ENCODE measurements at regions of chr1 and their contacts with region 1.

Region 1: DNA sequence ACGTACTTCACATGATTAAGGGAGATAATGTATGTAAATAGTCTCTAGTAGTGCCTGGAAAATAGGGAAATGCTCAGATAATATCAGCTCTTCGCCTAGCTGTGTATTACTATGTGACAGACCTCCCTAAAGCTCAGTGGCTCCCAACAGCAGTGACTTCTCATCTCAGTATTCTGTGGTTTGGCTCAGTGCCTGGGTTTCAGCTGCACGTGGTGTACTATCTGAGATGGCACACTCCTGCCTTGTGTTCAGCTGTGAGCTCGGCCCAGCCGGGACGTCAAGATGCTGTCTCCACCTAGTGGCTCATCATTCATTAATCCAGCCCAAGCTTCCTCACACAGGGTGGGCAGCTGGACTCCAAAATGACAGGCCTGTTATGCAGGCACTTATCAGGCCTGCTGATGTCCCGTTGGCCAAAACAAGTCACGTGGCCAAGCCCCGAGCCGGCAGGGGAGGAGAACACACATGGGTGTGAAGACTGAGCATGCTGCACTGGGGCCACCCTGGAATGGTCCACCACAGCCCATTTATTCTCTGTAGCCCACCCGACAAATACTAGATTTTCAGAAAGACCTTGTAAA is 17.8 kb downstream of the SLFNL1 start:
- DNase-seq: peak; percentile 94
- ATAC-seq: peak; percentile 99
- H3K4me3 Mint-ChIP-seq: no peak overlapping the region
- H3K27ac Mint-ChIP-seq: peak overlapping the region; percentile 59
- H3K4me1 Mint-ChIP-seq: peaks cover 25% of the 10 kb centered on the region
- H3K27me3 Mint-ChIP-seq: no peaks in the 10 kb centered on the region

Region 2: DNA sequence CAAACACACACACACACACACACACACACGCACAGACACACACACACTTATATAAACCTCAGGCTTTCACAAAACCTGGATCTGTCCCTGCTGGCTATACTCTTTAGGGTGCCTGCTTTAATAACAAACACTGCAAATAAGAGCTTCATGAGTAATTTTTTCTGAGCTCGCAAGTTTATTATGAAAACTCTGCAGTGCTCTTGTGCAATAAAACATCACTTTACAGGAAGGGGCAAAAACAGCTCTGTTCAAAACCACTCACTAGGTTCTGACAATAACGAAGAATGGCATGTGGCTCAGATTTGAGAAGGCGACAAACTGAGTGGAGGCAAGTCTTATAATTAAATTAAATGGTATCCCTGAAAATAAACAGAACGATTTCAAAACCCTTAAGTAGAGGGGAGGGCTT is 66.8 kb before region 1 on chr1:
- CTCF ChIA-PET with region 1: no interaction called
- DNase-seq: no peak
- ATAC-seq: no peak
- H3K4me3 Mint-ChIP-seq: no peak overlapping the region
- H3K27ac Mint-ChIP-seq: no peak overlapping the region
- H3K4me1 Mint-ChIP-seq: no peaks in the 10 kb centered on the region
- H3K27me3 Mint-ChIP-seq: peaks cover 10% of the 10 kb centered on the region

Region 3: GRCh38 chr1:40979233-40980067 is 24.3 kb before region 1 on chr1 and contains the start of gene CTPS1:
- CTCF ChIA-PET with region 1: interaction called, 12 read pairs
- DNase-seq: peak; percentile 96
- ATAC-seq: peak; percentile 92
- H3K4me3 Mint-ChIP-seq: peak within 1 kb of the TSS; percentile 87
- H3K27ac Mint-ChIP-seq: peak within 1 kb of the TSS; percentile 91
- H3K4me1 Mint-ChIP-seq: peaks cover 42% of the 10 kb centered on the region
- H3K27me3 Mint-ChIP-seq: no peaks in the 10 kb centered on the region
- total RNA-seq, gene CTPS1: 77.1 to 94.1 TPM